ENCODE measurements at regions of chrX and their contacts with region 1.

Region 1: DNA sequence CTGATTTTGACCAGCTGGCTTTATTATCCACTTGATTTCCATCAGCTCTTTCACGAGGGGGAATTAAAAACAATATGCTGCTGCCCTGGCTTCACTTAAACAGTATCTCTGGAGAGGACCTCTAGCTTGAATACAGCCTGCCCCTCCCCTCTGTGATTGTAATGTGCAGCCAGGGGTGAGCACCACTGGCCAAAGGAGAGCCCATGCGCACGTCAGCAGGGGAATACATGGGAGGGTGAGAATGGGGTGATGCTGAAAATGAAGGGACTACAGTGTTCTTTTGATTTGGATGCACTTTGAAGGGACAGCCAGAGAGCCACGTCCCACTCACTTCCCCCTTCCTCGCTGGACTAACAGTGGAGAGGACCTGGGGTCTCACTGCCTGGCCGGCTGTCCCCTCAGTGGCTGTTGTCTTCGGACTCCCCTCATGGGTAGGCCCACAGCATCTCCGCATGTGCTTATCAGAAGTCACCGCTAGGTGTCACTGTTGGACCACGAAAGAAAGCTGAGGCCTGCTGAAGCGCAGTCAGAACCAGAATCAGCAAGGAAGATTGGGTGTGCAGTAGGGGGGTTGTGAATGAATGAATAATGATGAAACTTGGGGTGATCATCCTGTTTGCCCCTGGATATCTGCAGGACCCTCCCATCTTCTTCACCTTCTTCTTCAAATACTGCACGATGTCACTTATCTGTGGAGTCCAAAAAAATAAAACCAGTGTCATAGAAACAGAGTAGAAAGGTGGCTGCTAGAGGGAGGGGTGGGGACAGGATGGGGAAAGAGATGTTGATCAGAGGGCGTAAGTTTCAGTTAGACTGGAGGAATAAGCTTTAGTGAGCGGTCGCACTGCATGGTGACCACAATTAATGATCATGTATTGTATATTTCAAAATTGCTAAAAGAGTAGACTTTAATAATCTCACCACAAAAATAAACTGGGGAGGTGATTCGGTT is 32.8 kb downstream of the CLCN4 start:
- DNase-seq: peak; percentile 51
- H3K4me3 ChIP-seq: no peak overlapping the region
- H3K27ac ChIP-seq: no peak overlapping the region
- H3K4me1 ChIP-seq: no peaks in the 10 kb centered on the region
- H3K27me3 ChIP-seq: no peaks in the 10 kb centered on the region
- CTCF ChIP-seq: peak; percentile 73 to 79

Region 2: GRCh38 chrX:10615931-10616775 is 426.6 kb after region 1 on chrX:
- CTCF ChIA-PET with region 1: interaction called, 4 read pairs
- dilution Hi-C with region 1: no loop called
- in situ Hi-C with region 1: loop called in 1 of 2 experiments (anchors 25 kb)
- intact Hi-C with region 1: loop called (anchors 1 kb)
- DNase-seq: no peak
- H3K4me3 ChIP-seq: peak overlapping the region in 2 of 3 experiments; percentile 12 to 15
- H3K27ac ChIP-seq: peak overlapping the region; percentile 76
- H3K4me1 ChIP-seq: peaks cover 3% of the 10 kb centered on the region
- H3K27me3 ChIP-seq: no peaks in the 10 kb centered on the region
- CTCF ChIP-seq: peak; percentile 63 to 67

Region 3: DNA sequence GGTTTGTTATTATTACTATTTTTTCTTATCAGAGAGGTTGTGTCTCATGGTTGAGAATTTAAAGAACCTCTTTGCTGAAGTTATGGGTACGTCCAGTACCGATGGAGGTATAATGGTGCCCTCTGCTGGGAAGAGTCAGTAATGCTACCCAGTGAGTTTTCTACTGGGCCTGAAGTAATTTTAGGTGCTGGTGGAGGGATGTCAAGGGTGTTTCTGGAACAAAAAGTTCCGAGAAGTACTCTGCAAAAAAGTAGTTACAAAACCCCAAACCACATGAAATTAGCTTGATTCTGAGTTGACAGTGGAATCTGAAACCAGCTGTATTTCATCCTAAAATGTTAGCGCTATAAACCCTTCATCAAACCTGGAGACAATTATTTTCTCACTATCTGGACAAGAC is 533.3 kb after region 1 on chrX:
- CTCF ChIA-PET with region 1: no interaction called
- dilution Hi-C with region 1: no loop called
- in situ Hi-C with region 1: no loop called
- intact Hi-C with region 1: loop called (anchors 1 kb)
- DNase-seq: peak; percentile 23
- H3K4me3 ChIP-seq: no peak overlapping the region
- H3K27ac ChIP-seq: no peak overlapping the region
- H3K4me1 ChIP-seq: no peaks in the 10 kb centered on the region
- H3K27me3 ChIP-seq: no peaks in the 10 kb centered on the region
- CTCF ChIP-seq: peak; percentile 75 to 83

Region 4: GRCh38 chrX:11100281-11101035 is 910.9 kb after region 1 on chrX:
- CTCF ChIA-PET with region 1: no interaction called
- dilution Hi-C with region 1: no loop called
- in situ Hi-C with region 1: loop called in 1 of 2 experiments (anchors 25 kb)
- intact Hi-C with region 1: loop called (anchors 1 kb)
- DNase-seq: peak; percentile 61
- H3K4me3 ChIP-seq: no peak overlapping the region
- H3K27ac ChIP-seq: peak overlapping the region; percentile 47
- H3K4me1 ChIP-seq: peaks cover 6% of the 10 kb centered on the region
- H3K27me3 ChIP-seq: no peaks in the 10 kb centered on the region
- CTCF ChIP-seq: peak; percentile 29 to 51

Region 5: GRCh38 chrX:11137543-11138139 is 948.0 kb after region 1 on chrX:
- CTCF ChIA-PET with region 1: no interaction called
- dilution Hi-C with region 1: loop called (anchors 25 kb)
- in situ Hi-C with region 1: loop called in 1 of 2 experiments (anchors 5 kb)
- intact Hi-C with region 1: loop called (anchors 1 kb)
- DNase-seq: no peak
- H3K4me3 ChIP-seq: no peak overlapping the region
- H3K27ac ChIP-seq: no peak overlapping the region
- H3K4me1 ChIP-seq: no peaks in the 10 kb centered on the region
- H3K27me3 ChIP-seq: no peaks in the 10 kb centered on the region
- CTCF ChIP-seq: peak; percentile 58 to 65

Measured in mammary epithelial cell (primary cell).